AG04450 (cell line): ENCODE measurements at regions of chr18 and their contacts with region 1.

Region 1: GRCh38 chr18:50819728-50820378 is at the start of gene MRO:
- DNase-seq: peak; percentile 29
- H3K4me3 ChIP-seq: peak within 1 kb of the TSS; percentile 54
- H3K27ac ChIP-seq: no peak within 1 kb of the TSS
- H3K27me3 ChIP-seq: peaks cover 8% of the 10 kb centered on the region
- CTCF ChIP-seq: peak; percentile 98
- polyA plus RNA-seq, gene MRO: 0.06 and 0.27 TPM in 2 replicates

Region 2: DNA sequence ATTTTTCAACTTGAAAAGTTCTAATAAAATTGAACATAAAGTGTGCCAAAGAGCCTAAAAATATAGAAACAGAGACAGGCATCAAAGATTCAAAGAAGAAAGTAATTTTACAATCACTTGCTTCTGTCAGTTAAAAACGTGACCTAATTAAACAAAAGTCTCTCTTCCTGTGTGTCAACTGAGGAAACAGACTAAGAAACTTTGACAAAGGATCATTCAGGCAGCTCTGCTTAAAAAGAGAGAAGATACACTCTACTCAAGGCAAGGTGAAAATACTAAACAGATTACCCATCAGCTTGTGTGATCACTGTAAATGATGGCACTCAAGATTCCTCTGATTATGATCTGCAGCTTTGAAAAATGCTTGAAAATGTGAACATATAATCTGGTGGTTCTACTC is 1407.2 kb before region 1 on chr18:
- CTCF ChIA-PET with region 1: no interaction called
- POLR2A ChIA-PET with region 1: no interaction called
- DNase-seq: no peak
- H3K4me3 ChIP-seq: no peak overlapping the region
- H3K27ac ChIP-seq: no peak overlapping the region
- H3K27me3 ChIP-seq: no peaks in the 10 kb centered on the region
- CTCF ChIP-seq: no peak

Region 3: GRCh38 chr18:50748243-50749229 is 71.3 kb before region 1 on chr18:
- CTCF ChIA-PET with region 1: no interaction called
- POLR2A ChIA-PET with region 1: no interaction called
- DNase-seq: no peak
- H3K4me3 ChIP-seq: no peak overlapping the region
- H3K27ac ChIP-seq: no peak overlapping the region
- H3K27me3 ChIP-seq: peaks cover 2% of the 10 kb centered on the region
- CTCF ChIP-seq: no peak

Region 4: DNA sequence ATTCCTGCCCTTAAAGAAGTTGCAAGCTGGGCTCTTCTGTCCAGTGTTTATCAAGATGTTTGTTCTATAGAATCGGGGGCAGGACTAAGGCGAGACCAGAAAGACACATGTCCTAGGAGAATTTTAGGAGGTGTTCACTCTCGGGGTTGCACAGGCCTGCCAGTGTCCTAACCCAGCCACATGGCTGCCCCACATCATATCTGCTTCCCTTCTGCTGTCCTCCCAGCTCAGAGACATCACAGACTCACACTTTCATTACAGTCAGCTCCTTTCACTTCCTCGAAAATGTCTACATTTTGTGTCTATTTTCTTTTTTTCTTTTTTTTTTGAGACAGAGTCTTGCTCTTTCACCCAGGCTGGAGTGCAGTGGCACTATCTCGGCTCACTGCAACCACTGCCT is 10.7 kb after region 1 on chr18:
- CTCF ChIA-PET with region 1: interaction called, 11 read pairs
- POLR2A ChIA-PET with region 1: no interaction called
- DNase-seq: no peak
- H3K4me3 ChIP-seq: no peak overlapping the region
- H3K27ac ChIP-seq: no peak overlapping the region
- H3K27me3 ChIP-seq: peaks cover 2% of the 10 kb centered on the region
- CTCF ChIP-seq: no peak

Region 5: GRCh38 chr18:50836521-50836957 is 16.7 kb after region 1 on chr18:
- CTCF ChIA-PET with region 1: interaction called, 11 read pairs
- POLR2A ChIA-PET with region 1: no interaction called
- DNase-seq: no peak
- H3K4me3 ChIP-seq: no peak overlapping the region
- H3K27ac ChIP-seq: no peak overlapping the region
- H3K27me3 ChIP-seq: peaks cover 3% of the 10 kb centered on the region
- CTCF ChIP-seq: no peak

Region 6: GRCh38 chr18:51383116-51383515 is 563.3 kb after region 1 on chr18:
- CTCF ChIA-PET with region 1: no interaction called
- POLR2A ChIA-PET with region 1: no interaction called
- DNase-seq: no peak
- H3K4me3 ChIP-seq: no peak overlapping the region
- H3K27ac ChIP-seq: no peak overlapping the region
- H3K27me3 ChIP-seq: no peaks in the 10 kb centered on the region
- CTCF ChIP-seq: no peak